PC-9 (cell line): ENCODE measurements at regions of chr3 and their contacts with region 1.

Region 1: DNA sequence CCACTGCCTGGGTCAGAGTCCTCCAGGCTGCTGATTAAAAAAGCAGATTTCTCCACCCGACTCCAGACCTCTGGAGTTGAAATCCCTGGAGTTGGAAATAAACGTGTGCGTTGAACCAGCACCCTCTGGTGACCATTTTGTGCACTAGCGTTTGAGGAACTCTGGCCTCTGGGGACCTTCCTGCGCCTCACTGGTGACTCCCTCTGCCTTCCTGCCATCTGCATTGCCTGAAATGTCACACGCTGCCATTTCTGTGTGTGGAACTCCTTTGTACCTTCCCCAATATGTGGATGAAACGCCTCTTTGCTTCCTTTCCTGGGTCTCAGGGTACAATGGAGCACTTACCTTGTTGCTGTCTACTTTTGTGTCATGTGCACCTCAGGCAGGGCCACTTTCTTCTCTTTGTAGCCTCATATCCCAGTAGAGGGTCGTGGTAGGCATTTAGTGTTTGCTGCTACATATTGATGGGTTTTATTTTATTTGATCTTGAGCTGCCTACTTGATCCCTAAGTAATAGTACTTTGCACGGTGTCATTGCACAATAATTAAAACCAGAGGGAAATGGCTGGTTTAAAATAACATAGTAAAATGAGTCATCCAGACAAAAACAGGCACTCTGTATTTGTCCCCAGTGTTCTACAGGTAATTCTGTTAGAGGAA is 56.8 kb downstream of the GPR171 start:
- DNase-seq: peak; percentile 73 to 79
- H3K4me3 ChIP-seq: peak overlapping the region; percentile 41; the same call in 1 of the 2 replicates
- H3K27ac ChIP-seq: peak overlapping the region; percentile 45
- H3K4me1 ChIP-seq: peaks cover 15% of the 10 kb centered on the region
- H3K27me3 ChIP-seq: no peaks in the 10 kb centered on the region
- CTCF ChIP-seq: peak; percentile 96

Region 2: DNA sequence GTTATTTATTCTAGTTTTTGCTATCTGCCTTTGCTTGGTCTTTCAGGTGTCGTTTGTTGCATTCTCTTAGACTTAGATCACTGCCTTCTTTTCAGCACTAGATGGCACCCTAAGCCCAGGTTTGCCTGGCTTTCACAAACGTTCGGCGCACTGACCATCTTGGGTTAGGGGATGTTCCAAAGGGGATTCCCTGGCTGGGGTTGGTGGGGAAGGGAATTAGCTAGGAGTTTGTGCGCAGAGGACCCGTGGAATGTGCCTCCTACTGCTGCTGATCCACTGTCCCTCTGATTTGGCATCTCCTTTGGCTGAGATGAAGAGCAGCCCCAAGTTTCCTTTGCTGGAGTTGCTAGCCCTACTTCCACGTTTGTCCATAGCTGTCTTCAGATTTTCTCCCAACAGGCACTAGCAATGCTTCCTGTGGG is 1209.4 kb before region 1 on chr3:
- CTCF ChIA-PET with region 1: no interaction called
- POLR2A ChIA-PET with region 1: no interaction called
- intact Hi-C with region 1: loop called (anchors 10 kb)
- DNase-seq: peak in 1 of 2 experiments; percentile 44
- H3K4me3 ChIP-seq: no peak overlapping the region
- H3K27ac ChIP-seq: no peak overlapping the region
- H3K4me1 ChIP-seq: no peaks in the 10 kb centered on the region
- H3K27me3 ChIP-seq: no peaks in the 10 kb centered on the region
- CTCF ChIP-seq: peak; percentile 76

Region 3: GRCh38 chr3:150528354-150528797 is 617.8 kb before region 1 on chr3:
- CTCF ChIA-PET with region 1: no interaction called
- POLR2A ChIA-PET with region 1: no interaction called
- intact Hi-C with region 1: loop called (anchors 1 kb)
- DNase-seq: peak in 1 of 2 experiments; percentile 38
- H3K4me3 ChIP-seq: no peak overlapping the region
- H3K27ac ChIP-seq: no peak overlapping the region
- H3K4me1 ChIP-seq: no peaks in the 10 kb centered on the region
- H3K27me3 ChIP-seq: no peaks in the 10 kb centered on the region
- CTCF ChIP-seq: peak; percentile 59

Region 4: GRCh38 chr3:150870396-150870795 is 275.8 kb before region 1 on chr3:
- CTCF ChIA-PET with region 1: no interaction called
- POLR2A ChIA-PET with region 1: no interaction called
- intact Hi-C with region 1: loop called (anchors 1 kb)
- DNase-seq: no peak
- H3K4me3 ChIP-seq: no peak overlapping the region
- H3K27ac ChIP-seq: no peak overlapping the region
- H3K4me1 ChIP-seq: peaks cover 5% of the 10 kb centered on the region; the same call in 1 of the 2 replicates
- H3K27me3 ChIP-seq: no peaks in the 10 kb centered on the region
- CTCF ChIP-seq: no peak

Region 5: DNA sequence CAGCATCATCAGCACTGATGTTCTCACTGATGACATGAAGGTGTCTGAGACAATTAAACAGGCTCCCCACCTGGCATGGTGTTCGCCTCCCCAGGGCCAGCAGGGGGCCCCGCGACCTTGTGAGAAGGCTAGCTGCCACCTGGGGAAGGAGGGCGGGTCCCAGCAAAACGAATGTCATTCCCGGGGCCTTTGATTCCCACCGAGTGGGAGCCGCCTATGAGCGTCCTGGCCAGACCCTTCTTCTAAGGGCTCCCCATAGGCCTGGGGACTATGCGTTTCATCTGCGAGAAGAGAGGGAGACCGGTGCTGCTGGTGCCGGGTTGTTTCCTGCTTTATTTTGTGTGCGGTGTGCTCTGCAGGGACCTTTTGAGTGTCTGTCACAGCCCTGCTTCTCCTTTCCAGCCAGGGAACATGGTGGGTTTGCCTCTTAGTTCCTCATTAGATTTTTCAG is 220.4 kb before region 1 on chr3:
- CTCF ChIA-PET with region 1: interaction called, 5 read pairs
- POLR2A ChIA-PET with region 1: no interaction called
- intact Hi-C with region 1: loop called (anchors 1 kb)
- DNase-seq: peak in 1 of 2 experiments; percentile 77
- H3K4me3 ChIP-seq: no peak overlapping the region
- H3K27ac ChIP-seq: no peak overlapping the region
- H3K4me1 ChIP-seq: no peaks in the 10 kb centered on the region
- H3K27me3 ChIP-seq: peaks cover 4% of the 10 kb centered on the region; the same call in 1 of the 2 replicates
- CTCF ChIP-seq: peak; percentile 92

Region 6: DNA sequence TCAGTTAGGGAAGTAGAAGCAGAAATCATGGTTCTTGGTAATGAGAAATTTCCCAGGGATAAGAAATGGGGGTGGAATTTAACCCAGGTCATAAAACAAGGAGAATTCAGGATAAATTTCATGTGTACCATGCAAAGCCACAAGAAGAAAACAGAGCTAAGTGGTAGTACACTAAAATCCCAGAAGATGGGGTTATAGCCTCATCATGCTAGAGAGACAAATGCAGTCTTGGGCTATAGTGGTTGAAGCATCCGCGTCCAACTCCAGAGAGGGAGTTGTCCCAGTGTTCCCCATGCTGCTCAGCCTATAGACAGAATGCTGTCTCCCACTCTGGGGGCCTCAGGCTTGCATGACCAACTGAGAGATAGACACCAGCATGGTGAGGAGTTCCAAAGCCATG is 137.5 kb before region 1 on chr3:
- CTCF ChIA-PET with region 1: no interaction called
- POLR2A ChIA-PET with region 1: interaction called, 6 read pairs
- intact Hi-C with region 1: loop called (anchors 2 kb)
- DNase-seq: no peak
- H3K4me3 ChIP-seq: no peak overlapping the region
- H3K27ac ChIP-seq: no peak overlapping the region
- H3K4me1 ChIP-seq: no peaks in the 10 kb centered on the region
- H3K27me3 ChIP-seq: no peaks in the 10 kb centered on the region
- CTCF ChIP-seq: peak; percentile 32; the same call in 1 of the 2 replicates

Region 7: DNA sequence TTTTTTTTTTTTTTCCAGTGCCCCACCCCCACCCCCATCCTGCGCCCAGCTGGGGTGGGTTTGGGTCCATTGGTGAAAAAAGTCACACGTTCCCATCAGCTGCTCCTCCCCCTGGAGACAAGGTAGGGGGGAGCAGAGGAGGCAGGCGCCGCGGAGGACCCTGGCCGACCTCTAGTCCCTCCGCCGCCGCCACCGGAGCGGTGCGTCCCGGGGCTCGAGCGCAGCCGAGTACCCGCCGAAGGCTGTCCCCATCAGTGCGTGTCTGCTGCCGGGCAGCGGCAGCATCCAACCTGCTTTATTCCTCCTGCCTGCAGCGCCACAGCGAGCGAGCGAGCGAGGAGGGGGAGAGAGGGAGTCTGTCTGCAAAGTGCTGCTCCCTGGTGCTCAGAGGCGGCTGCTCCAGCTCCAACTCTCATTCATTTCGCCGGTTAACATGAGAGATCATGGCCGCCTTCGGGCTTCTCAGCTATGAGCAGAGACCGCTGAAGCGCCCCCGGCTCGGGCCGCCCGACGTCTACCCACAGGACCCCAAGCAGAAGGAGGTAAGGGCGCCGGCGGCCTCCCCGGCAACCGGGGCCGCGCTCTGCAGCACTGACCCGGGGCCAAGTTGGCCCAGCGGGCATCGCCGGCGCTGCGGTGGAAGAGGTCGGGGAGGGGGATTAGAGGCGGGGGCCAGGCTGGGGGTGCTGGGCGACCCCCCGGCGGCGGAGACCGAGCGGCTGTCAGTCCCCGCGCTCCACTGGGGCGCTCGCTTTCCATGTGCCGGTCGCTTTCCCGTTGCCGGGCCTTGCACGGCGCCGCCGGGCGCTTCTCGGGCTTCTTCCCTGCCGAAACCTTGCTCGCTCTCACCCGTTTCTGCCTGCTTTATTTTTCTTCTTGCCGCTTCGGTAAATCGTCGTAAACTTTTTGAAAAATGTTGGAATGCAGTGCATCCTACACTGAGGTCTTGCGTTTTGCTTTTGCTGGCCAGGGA is 59.4 kb before region 1 on chr3:
- CTCF ChIA-PET with region 1: no interaction called
- POLR2A ChIA-PET with region 1: no interaction called
- intact Hi-C with region 1: loop called (anchors 1 kb)
- DNase-seq: peak; percentile 62 to 73
- H3K4me3 ChIP-seq: peak overlapping the region; percentile 74
- H3K27ac ChIP-seq: no peak overlapping the region
- H3K4me1 ChIP-seq: no peaks in the 10 kb centered on the region
- H3K27me3 ChIP-seq: no peaks in the 10 kb centered on the region
- CTCF ChIP-seq: 0 out of 2 replicates have a peak, but pooled peaks have one; percentile 28